ENCODE measurements at regions of chr1 and their contacts with region 1.

Region 1: GRCh38 chr1:29802181-29803068 is 566.1 kb downstream of the PTPRU start:
- DNase-seq: no peak
- ATAC-seq: no peak
- H3K4me3 ChIP-seq: no peak overlapping the region
- H3K27ac ChIP-seq: no peak overlapping the region
- H3K4me1 ChIP-seq: peaks cover 7 to 8% of the 10 kb centered on the region in 2 experiments; a peak in 3 of 5 replicates
- H3K27me3 ChIP-seq: peaks cover 0 to 32% of the 10 kb centered on the region in 2 experiments; a peak in 3 of 5 replicates
- CTCF ChIP-seq: no peak
- EP300 ChIP-seq: no peak
- POLR2A ChIP-seq: no peak
- RAD21 ChIP-seq: no peak

Region 2: DNA sequence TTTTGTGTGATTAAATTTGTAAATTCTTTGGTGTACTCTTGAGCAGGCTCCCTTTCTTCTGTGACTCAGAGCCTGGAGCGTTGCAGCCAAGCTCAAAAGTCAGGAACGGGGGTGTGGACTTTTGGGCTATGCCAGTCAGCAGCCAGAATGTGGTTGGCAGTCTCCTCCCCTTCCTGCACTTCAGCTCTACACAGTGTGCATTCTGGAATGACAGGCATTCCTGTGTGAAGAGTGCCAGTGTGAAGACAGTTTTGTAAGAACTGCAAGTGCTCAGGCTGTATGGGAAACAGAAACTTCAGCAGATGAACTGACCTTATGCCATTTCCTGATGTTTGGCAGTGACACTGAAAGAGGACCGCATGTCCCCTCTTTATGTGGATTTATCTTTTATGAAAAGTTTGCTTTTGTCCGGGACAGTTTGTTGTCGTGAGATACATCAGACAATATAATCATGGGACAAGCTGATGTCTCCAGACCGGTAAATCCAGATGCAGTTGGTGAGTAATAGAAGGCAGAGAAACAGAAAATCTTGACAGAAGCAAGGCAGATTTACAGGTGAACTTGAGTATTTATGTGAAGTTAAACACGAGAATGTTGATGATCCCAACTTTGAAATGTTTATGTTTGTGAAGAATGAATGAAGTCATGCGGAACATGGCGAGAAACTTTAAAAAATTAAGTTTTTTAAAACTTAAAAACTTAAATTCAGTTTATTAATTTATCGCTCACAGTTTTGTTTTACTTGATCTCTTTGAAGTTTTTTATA is 1364.3 kb before region 1 on chr1:
- CTCF ChIA-PET with region 1: no interaction called
- POLR2A ChIA-PET with region 1: no interaction called
- in situ Hi-C with region 1: loop called (anchors 25 kb)
- intact Hi-C with region 1: no loop called
- DNase-seq: peak in 2 of 4 experiments; percentile 26 to 61
- ATAC-seq: peak; percentile 61
- H3K4me3 ChIP-seq: peak overlapping the region; percentile 2; the same call in 1 of the 2 replicates
- H3K27ac ChIP-seq: peak overlapping the region; percentile 41; the same call in 2 of the 3 replicates
- H3K4me1 ChIP-seq: peaks cover 17 to 22% of the 10 kb centered on the region in 2 experiments
- H3K27me3 ChIP-seq: no peaks in the 10 kb centered on the region
- CTCF ChIP-seq: no peak
- EP300 ChIP-seq: no peak
- POLR2A ChIP-seq: no peak
- RAD21 ChIP-seq: no peak

Region 3: GRCh38 chr1:29732453-29732852 is 70.0 kb before region 1 on chr1:
- CTCF ChIA-PET with region 1: no interaction called
- POLR2A ChIA-PET with region 1: no interaction called
- in situ Hi-C with region 1: no loop called
- intact Hi-C with region 1: no loop called
- DNase-seq: no peak
- ATAC-seq: no peak
- H3K4me3 ChIP-seq: no peak overlapping the region
- H3K27ac ChIP-seq: no peak overlapping the region
- H3K4me1 ChIP-seq: no peaks in the 10 kb centered on the region
- H3K27me3 ChIP-seq: no peaks in the 10 kb centered on the region
- CTCF ChIP-seq: no peak
- EP300 ChIP-seq: no peak
- POLR2A ChIP-seq: no peak
- RAD21 ChIP-seq: no peak

Measured in K562 (cell line).